Mucosa of descending colon (tissue), 3 donors: ENCODE measurements at regions of chr20 and their contacts with region 1.

Region 1: GRCh38 chr20:24160563-24161375 is 172.2 kb upstream of the GGTLC1 start:
- DNase-seq: peak in 2 of 3 donors; percentile 61 to 65
- ATAC-seq: peak; percentile 61
- H3K4me3 ChIP-seq: no peak overlapping the region
- H3K4me1 ChIP-seq: no peaks in the 10 kb centered on the region
- CTCF ChIP-seq: peak; percentile 48

Region 2: DNA sequence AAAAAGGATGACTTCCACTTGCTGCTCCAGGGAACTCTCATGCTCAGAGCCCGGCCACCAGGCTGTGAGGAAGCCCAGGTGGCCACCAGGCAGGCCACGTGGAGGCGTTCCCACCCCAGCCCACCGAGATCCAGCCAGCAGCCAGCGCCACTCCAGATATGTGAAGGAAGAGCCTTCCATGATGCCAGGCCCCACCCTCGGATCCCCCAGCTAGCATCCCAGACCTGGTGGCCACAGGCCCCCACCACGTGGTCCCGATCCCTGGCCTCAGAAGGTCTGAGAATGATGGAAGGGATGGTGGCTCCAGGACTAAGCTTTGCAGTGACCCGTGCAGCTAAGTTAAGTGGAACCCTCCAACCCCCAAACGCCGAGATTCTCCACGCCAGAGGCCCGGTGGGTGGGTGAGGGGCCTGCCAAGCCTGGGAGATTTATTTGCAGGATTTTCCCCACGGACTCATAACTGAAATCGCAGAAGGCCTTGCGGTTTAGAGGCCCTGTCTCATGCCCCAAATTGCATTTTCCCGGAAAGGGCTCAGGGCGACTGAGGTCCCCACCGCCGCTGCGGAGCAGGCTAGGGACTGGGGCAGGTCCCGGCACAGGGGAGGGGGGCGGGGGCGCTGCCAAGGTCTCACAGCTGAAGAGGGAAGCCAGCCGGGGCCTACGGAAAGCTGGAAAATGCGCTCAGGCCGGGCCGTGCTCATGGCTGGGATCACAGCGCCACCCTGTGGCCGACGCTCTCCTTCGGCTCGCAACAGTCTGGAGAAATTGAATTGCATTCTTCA is 757.2 kb after region 1 on chr20:
- intact Hi-C with region 1: loop called (anchors 10 kb)
- DNase-seq: peak in 2 of 3 donors; percentile 75 to 83
- ATAC-seq: peak; percentile 93
- H3K4me3 ChIP-seq: no peak overlapping the region
- H3K4me1 ChIP-seq: no peaks in the 10 kb centered on the region
- CTCF ChIP-seq: peak; percentile 65